Colonic mucosa (tissue), 4 donors: ENCODE measurements at regions of chr17 and their contacts with region 1.

Region 1: GRCh38 chr17:46002311-46002972 is 3.4 kb downstream of the STH start:
- DNase-seq: peak; percentile 78
- H3K4me3 ChIP-seq: no peak overlapping the region
- H3K27ac ChIP-seq: no peak overlapping the region
- H3K4me1 ChIP-seq: no peaks in the 10 kb centered on the region
- H3K27me3 ChIP-seq: no peaks in the 10 kb centered on the region
- CTCF ChIP-seq: peak; percentile 99

Region 2: GRCh38 chr17:46202424-46202823 is 200.0 kb after region 1 on chr17:
- intact Hi-C with region 1: no loop called
- DNase-seq: no peak
- H3K4me3 ChIP-seq: no peak overlapping the region
- H3K27ac ChIP-seq: peak overlapping the region; percentile 72
- H3K4me1 ChIP-seq: peaks cover 15% of the 10 kb centered on the region
- H3K27me3 ChIP-seq: no peaks in the 10 kb centered on the region
- CTCF ChIP-seq: no peak

Region 3: DNA sequence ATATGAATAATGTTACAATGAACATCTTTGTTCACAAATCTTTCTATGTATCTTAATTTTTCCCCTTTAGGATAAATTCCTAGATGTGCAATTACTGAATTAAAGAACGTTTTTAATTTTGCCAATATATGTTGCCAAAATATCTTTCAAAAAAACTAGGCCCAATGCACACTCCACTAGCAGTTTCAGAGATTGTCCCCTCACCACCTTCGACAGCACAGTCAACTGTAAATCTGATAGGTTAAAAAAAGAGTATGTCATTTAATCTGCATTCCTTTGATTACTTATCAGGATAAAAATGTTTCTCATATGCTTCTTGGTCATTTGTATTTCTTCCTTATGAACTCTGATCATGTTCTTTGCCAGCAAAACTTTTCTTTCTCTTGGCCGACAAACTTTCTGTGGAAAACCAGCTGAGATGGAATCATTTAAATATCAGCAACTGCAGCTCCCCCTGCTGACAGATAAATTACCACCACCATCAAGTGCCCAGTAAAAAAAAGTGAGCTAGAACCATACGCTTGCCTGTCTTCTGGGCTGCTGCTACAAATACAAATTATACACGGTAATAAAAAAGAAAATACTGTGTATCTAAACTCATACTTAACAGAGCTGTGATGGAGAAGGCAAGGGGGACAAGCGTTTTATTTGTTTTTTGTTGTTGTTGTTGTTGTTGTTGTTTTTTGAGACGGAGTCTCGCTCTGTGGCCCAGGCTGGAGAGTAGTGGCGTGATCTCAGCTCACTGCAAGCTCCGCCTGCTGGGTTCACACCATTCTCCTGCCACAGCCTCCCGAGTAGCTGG is 210.4 kb after region 1 on chr17:
- intact Hi-C with region 1: loop called (anchors 2 kb)
- DNase-seq: peak; percentile 85
- H3K4me3 ChIP-seq: no peak overlapping the region
- H3K27ac ChIP-seq: no peak overlapping the region
- H3K4me1 ChIP-seq: no peaks in the 10 kb centered on the region
- H3K27me3 ChIP-seq: no peaks in the 10 kb centered on the region
- CTCF ChIP-seq: peak; percentile 61